Gastrocnemius medialis (tissue), 4 donors: ENCODE measurements at regions of chr9 and their contacts with region 1.

Region 1: GRCh38 chr9:104279535-104280190 is 185.6 kb downstream of the SMC2 start:
- DNase-seq: no peak
- ATAC-seq: no peak
- H3K4me3 ChIP-seq: no peak overlapping the region
- H3K27ac ChIP-seq: no peak overlapping the region
- H3K4me1 ChIP-seq: no peaks in the 10 kb centered on the region
- H3K27me3 ChIP-seq: no peaks in the 10 kb centered on the region
- CTCF ChIP-seq: no peak
- POLR2A ChIP-seq: no peak

Region 2: DNA sequence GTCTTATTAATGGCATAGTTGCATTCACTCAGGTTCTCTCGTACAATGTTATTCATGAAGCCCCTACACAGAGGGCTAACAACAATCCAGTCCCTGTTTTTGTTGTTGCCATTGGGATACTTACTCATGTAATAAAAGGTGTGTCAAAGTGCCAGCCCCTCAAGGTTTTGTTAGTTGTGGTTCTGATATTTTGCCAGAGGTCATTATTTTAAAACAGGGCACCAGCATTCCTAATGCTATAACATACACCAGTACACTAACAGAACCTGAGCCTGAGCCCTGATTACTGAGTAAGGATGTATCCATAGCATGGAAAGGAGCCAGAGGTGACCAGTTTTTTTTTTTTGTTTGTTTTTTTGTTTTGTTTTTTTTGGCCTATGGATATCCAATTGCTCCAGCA is 135.3 kb before region 1 on chr9:
- in situ Hi-C with region 1: no loop called
- intact Hi-C with region 1: no loop called
- DNase-seq: no peak
- ATAC-seq: no peak
- H3K4me3 ChIP-seq: no peak overlapping the region
- H3K27ac ChIP-seq: no peak overlapping the region
- H3K4me1 ChIP-seq: no peaks in the 10 kb centered on the region
- H3K27me3 ChIP-seq: no peaks in the 10 kb centered on the region
- CTCF ChIP-seq: no peak
- POLR2A ChIP-seq: no peak

Region 3: DNA sequence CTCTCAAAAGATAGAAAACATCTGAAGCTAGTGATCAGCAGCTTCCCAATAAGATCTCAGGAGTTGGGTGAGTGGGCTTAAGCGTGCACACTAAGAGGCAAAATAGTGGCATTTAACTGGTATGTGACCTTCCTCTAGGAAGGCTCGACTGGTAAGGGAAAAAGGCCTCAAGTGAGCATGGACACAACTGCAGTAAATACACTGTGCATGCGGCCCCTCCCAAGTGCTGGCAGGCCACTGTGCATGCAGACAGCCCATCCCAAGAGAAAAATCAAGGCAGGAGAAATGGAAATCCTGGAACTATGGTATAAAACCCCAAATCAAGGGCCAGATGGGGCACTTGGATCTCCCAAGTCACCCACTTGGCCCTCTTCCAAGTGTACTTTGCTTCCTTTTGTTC is 72.9 kb before region 1 on chr9:
- in situ Hi-C with region 1: loop called in 1 of 4 experiments (anchors 10 kb)
- intact Hi-C with region 1: no loop called
- DNase-seq: no peak
- ATAC-seq: no peak
- H3K4me3 ChIP-seq: no peak overlapping the region
- H3K27ac ChIP-seq: no peak overlapping the region
- H3K4me1 ChIP-seq: no peaks in the 10 kb centered on the region
- H3K27me3 ChIP-seq: no peaks in the 10 kb centered on the region
- CTCF ChIP-seq: no peak
- POLR2A ChIP-seq: no peak